Heart left ventricle (tissue), 16 donors: ENCODE measurements at regions of chr22 and their contacts with region 1.

Region 1: DNA sequence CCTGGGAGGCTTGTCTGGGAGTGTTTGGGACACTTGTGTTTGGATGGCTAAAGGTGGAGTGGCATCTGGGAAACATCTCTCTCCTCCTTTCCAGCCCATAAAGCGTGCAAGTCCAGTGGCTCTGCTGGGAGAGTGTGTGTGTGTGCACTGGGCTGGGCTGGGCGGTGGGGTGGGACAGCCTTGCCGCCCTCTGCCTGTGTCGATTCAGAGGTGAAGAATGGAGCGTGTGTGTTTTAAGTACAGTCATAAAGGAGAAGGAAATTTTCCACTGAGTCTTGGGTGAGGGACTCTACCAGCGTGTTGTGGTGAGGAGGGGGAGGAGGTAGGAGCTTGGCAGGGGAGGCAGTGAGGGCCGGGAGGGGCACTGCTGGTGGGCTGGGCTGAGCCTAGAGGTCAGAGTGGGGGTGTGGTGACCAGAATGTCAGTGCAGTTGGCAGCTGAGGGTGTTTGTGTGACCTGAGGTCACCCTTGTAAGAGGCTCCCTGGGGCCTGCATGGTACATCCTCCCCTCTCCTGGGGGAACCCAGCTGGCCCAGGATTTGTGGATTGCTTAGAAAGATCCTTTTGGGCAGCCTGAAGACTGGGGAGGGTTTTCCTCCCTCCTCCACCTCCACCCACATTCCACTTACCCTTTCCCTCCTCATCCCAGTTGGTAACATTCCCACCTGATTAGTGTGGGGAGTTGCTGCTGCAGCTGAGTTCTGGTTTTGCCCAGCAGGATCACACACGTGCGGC is 1.7 kb downstream of the TIMP3 start:
- DNase-seq: peak in 2 of 5 donors; percentile 54 to 61
- ATAC-seq: peak; percentile 20 to 40 (median 31)
- H3K4me3 ChIP-seq: peak overlapping the region; percentile 64 to 99 (median 94)
- H3K27ac ChIP-seq: peak overlapping the region; percentile 77 to 94 (median 92)
- H3K4me1 ChIP-seq: peaks cover 0 to 68% (median 44%) of the 10 kb centered on the region in 12 donors
- H3K27me3 ChIP-seq: peaks cover 0 to 14% (median 0%) of the 10 kb centered on the region in 9 donors
- CTCF ChIP-seq: no peak
- POLR2A ChIP-seq: no peak

Region 2: GRCh38 chr22:32824531-32825312 is 21.5 kb after region 1 on chr22:
- intact Hi-C with region 1: loop called in 1 of 10 experiments (anchors 2 kb)
- DNase-seq: no peak
- ATAC-seq: no peak
- H3K4me3 ChIP-seq: no peak overlapping the region
- H3K27ac ChIP-seq: peak overlapping the region in 7 of 12 donors; percentile 1 to 56 (median 51)
- H3K4me1 ChIP-seq: peaks cover 35 to 98% (median 88%) of the 10 kb centered on the region in 12 donors
- H3K27me3 ChIP-seq: no peaks in the 10 kb centered on the region
- CTCF ChIP-seq: no peak
- POLR2A ChIP-seq: no peak

Region 3: DNA sequence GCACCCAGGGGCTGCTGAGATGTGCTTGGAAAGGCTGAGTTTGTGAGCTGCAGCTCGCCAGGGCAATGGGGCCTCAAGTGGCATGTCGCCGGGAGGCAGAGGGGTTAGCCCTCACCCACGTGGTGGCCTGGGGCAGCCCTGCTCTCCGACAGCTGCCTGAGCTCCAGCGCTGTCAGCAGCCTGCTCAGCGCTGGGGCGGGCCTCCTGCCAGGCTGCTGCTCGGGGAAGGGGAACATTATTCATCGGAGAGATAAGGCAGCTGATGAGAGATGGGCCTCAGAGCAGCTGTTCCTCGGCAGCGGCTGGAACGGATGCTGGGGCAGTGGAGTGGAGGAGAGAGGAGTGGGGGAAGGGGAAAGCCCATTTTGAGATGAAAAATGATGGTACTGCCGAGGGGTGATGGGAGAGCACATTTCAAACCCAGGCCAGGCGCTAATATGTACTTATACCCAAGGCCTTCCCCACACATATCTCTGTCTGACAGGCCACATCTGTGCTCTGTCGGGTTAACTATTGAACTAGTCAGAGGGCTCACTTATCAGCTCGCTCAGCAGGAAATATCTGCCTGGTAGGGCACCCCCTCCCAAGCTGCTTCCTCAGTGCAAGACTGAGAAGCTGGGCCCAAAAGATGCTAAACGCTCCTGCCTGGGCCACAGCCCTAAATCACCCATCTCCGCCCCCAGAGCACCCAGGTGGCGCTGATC is 77.9 kb after region 1 on chr22:
- intact Hi-C with region 1: loop called in 1 of 10 experiments (anchors 2 kb)
- DNase-seq: peak; percentile 86 to 94 (median 92)
- ATAC-seq: peak; percentile 96 to 99 (median 98)
- H3K4me3 ChIP-seq: no peak overlapping the region
- H3K27ac ChIP-seq: peak overlapping the region in 11 of 12 donors; percentile 11 to 76 (median 49)
- H3K4me1 ChIP-seq: peaks cover 3 to 25% (median 13%) of the 10 kb centered on the region in 12 donors
- H3K27me3 ChIP-seq: no peaks in the 10 kb centered on the region
- CTCF ChIP-seq: no peak
- POLR2A ChIP-seq: no peak